ENCODE measurements at regions of chr6 and their contacts with region 1.

Region 1: DNA sequence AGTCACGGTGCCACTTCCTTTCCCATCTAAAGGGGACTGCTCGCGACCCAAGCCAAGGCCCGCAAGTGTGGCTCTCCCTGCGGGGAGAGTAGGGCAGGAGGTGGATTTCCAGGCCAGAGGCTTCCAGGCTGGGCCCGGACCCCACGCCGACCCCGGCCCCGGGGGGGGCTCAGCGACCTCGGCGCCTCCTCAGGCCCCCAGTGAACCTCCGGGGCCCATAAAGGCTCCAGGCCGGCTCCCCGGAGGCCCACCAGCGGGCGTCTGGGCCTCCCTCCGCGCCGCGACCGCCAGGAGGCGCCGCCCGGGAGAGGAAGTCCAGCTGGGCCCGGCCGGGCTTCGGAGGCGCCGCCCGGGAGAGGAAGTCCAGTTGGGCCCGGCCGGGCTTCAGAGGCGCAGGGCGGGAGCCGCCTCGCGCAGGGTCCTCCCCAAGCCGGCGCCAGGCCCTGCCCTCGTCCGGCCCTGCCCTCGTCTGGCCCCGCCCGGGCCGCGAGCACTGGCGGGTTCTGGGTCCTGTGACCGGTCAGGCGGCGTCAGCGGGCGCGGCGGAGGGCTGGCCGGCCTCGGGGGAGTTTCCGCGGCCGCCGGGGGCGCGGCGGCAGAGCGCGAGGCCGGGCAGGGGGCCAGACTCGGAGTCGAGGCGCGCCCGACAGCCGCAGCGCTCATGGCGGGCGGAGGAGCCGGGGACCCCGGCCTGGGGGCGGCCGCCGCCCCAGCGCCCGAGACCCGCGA is at the start of gene RAB32:
- DNase-seq: peak; percentile 93
- H3K4me3 ChIP-seq: peak within 1 kb of the TSS; percentile 80 to 82
- H3K27ac ChIP-seq: peak within 1 kb of the TSS; percentile 97 to 99
- H3K4me1 ChIP-seq: peaks cover 11% of the 10 kb centered on the region
- H3K27me3 ChIP-seq: no peaks in the 10 kb centered on the region
- CTCF ChIP-seq: peak; percentile 68 to 71 (median 70)
- POLR2A ChIP-seq: no peak
- total RNA-seq, gene RAB32: 31.3 to 39.1 TPM

Region 2: GRCh38 chr6:146697921-146698320 is 154.5 kb after region 1 on chr6:
- intact Hi-C with region 1: loop called (anchors 5 kb)
- DNase-seq: no peak
- H3K4me3 ChIP-seq: no peak overlapping the region
- H3K27ac ChIP-seq: no peak overlapping the region
- H3K4me1 ChIP-seq: no peaks in the 10 kb centered on the region
- H3K27me3 ChIP-seq: no peaks in the 10 kb centered on the region
- CTCF ChIP-seq: no peak
- POLR2A ChIP-seq: no peak

Region 3: GRCh38 chr6:146913842-146914488 is 370.6 kb after region 1 on chr6:
- intact Hi-C with region 1: no loop called
- DNase-seq: peak; percentile 76
- H3K4me3 ChIP-seq: peak overlapping the region in 1 of 2 donors; percentile 7
- H3K27ac ChIP-seq: peak overlapping the region; percentile 54 to 63
- H3K4me1 ChIP-seq: peaks cover 9% of the 10 kb centered on the region
- H3K27me3 ChIP-seq: no peaks in the 10 kb centered on the region
- CTCF ChIP-seq: no peak
- POLR2A ChIP-seq: no peak